ENCODE measurements at regions of chr16 and their contacts with region 1.

Region 1: DNA sequence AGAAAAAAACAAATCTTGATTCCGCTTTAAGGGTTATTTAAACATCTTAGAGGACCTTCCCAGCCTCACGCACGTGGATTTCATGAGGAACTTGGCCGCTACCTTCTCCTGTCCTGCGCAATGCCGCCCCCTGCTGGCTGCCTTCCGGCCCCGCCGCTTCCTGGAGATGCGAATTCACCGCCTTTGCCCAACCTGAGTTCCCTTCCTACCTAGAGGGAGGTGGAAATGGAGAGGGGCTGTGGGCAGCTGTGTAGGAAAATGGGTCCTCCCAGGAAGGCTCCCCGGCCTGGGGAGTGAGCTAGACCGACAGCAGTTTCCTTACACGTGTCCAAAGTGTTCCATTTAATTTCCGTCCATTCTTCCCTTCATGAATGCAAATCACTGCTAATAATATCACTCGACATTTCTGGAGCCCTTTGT is 1.0 kb upstream of the ABCC12 start:
- DNase-seq: peak; percentile 80
- CTCF ChIP-seq: peak; percentile 98

Region 2: DNA sequence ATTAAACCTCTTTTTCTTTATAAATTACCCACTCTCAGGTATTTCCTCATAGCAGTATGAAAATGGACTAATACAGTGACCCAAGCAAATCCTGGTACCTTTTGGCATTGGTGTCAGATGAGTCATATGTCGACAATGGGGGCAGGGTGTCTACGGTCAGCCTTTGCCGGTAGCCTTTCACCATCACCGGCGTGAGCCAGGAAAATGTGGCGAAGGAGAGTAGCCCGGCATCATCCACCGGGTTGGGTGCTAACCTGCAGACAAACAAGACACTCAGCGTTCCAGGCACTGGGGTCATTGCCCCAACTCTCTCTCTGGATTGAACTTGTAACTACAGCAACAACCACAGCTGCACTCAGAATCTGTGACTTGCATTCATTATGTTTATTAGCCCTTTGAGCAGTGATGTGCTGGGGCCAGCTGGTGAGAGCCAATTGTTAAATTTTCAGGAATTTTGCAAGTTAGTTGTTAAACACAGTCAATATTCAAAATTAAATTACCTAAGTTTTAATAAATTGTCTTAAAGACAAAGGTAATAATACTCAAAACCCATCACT is 12.9 kb before region 1 on chr16:
- CTCF ChIA-PET with region 1: interaction called, 14 read pairs
- POLR2A ChIA-PET with region 1: no interaction called
- DNase-seq: no peak
- CTCF ChIP-seq: no peak